Heart right ventricle (tissue), 16 donors: ENCODE measurements at regions of chr2 and their contacts with region 1.

Region 1: DNA sequence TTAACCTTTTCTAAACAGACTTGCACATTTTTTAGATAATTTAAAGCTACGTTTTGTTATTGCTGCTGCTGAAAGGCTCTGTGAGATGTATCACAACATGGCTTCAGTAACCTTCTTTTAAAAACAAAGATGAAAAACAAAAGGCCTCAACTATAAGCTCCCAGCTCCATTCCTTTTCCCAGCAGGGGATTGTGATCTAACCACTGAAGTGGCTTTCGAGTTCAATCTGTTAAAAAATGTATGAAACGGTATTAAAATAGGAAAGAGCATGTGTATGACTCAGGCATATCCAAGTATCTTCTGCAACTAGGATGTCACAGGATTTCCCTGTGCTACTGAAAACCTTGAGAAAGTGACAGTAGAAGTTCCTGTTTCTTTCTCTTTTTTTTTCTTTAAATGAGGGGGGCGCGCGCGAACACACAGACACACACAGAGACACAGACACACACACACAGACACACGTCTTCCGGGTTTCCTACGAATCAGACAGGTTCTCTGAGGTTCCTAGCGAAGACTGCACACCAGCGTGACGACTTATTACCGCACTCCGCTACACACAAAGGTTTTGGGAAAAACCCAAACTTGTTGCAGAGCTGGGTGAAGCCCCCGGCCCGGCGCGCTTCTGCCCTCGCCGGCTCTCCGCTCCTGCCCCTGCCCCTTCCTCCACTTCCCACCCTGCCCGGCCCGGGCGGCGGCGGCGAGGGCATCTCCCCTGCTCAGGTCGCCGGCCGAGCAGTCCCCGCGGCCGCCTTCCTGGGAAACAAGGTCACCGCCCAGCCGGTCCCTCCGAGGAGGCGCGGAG is 86.8 kb downstream of the RBMS1 start:
- DNase-seq: peak; percentile 50 to 65
- ATAC-seq: peak; percentile 12 to 67 (median 52)
- H3K4me3 ChIP-seq: peak overlapping the region; percentile 79 to 97 (median 90)
- H3K27ac ChIP-seq: peak overlapping the region; percentile 88 to 100 (median 96)
- H3K4me1 ChIP-seq: peaks cover 4 to 82% (median 77%) of the 10 kb centered on the region in 9 donors
- H3K27me3 ChIP-seq: no peaks in the 10 kb centered on the region
- CTCF ChIP-seq: peak in 1 of 9 donors; percentile 5

Region 2: GRCh38 chr2:160269803-160270570 is 136.8 kb before region 1 on chr2:
- intact Hi-C with region 1: loop called in 2 of 10 experiments (anchors 5 kb)
- DNase-seq: peak; percentile 88 to 93
- ATAC-seq: peak; percentile 88 to 94 (median 92)
- H3K4me3 ChIP-seq: peak overlapping the region; percentile 12 to 60 (median 56)
- H3K27ac ChIP-seq: peak overlapping the region; percentile 90 to 99 (median 95)
- H3K4me1 ChIP-seq: peaks cover 4 to 43% (median 33%) of the 10 kb centered on the region in 9 donors
- H3K27me3 ChIP-seq: no peaks in the 10 kb centered on the region
- CTCF ChIP-seq: peak; percentile 60 to 85 (median 69)

Region 3: DNA sequence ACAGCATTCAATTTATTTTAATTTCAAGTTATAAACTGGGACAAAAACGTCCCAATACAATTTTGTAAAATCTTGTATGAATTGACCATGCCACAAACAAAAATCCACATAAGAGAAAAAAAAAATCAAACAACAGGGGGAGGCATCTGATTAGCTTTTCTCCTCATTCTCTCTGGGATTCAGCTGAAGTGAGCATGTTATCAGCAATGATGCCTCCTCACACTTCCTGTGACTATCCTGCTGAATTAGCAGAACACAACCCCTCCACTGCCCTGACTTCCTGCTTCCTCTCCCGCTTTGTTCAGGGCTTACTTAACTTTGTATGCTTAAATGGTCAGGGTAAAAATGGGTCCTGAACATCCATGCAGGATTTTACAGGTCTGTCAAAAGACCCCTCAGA is 74.5 kb before region 1 on chr2:
- intact Hi-C with region 1: loop called in 6 of 10 experiments (anchors 5 to 10 kb)
- DNase-seq: peak in 1 of 2 donors; percentile 37
- ATAC-seq: peak in 7 of 8 donors; percentile 39 to 81 (median 45)
- H3K4me3 ChIP-seq: no peak overlapping the region
- H3K27ac ChIP-seq: peak overlapping the region in 3 of 10 donors; percentile 56 to 82 (median 67)
- H3K4me1 ChIP-seq: peaks cover 5 to 100% (median 95%) of the 10 kb centered on the region in 9 donors
- H3K27me3 ChIP-seq: no peaks in the 10 kb centered on the region
- CTCF ChIP-seq: peak in 5 of 9 donors; percentile 10 to 41 (median 25)

Region 4: GRCh38 chr2:160375802-160376469 is 30.9 kb before region 1 on chr2:
- intact Hi-C with region 1: loop called in 2 of 10 experiments (anchors 5 kb)
- DNase-seq: no peak
- ATAC-seq: peak in 7 of 8 donors; percentile 43 to 80 (median 57)
- H3K4me3 ChIP-seq: peak overlapping the region in 3 of 10 donors; percentile 5 to 16 (median 15)
- H3K27ac ChIP-seq: peak overlapping the region; percentile 55 to 88 (median 78)
- H3K4me1 ChIP-seq: peaks cover 35 to 100% (median 100%) of the 10 kb centered on the region in 9 donors
- H3K27me3 ChIP-seq: no peaks in the 10 kb centered on the region
- CTCF ChIP-seq: no peak

Region 5: GRCh38 chr2:160482673-160483072 is 75.9 kb after region 1 on chr2:
- intact Hi-C with region 1: loop called in 1 of 10 experiments (anchors 10 kb)
- DNase-seq: no peak
- ATAC-seq: peak in 2 of 8 donors; percentile 46 to 64
- H3K4me3 ChIP-seq: no peak overlapping the region
- H3K27ac ChIP-seq: peak overlapping the region in 3 of 10 donors; percentile 12 to 45 (median 35)
- H3K4me1 ChIP-seq: peaks cover 0 to 88% (median 66%) of the 10 kb centered on the region in 9 donors
- H3K27me3 ChIP-seq: no peaks in the 10 kb centered on the region
- CTCF ChIP-seq: no peak